ENCODE measurements at regions of chr4 and their contacts with region 1.

Region 1: GRCh38 chr4:156946516-156947424 is 24.8 kb downstream of the PDGFC start:
- DNase-seq: peak; percentile 89
- H3K4me3 ChIP-seq: no peak overlapping the region
- H3K27ac ChIP-seq: peak overlapping the region; percentile 84
- H3K4me1 ChIP-seq: peaks cover 60% of the 10 kb centered on the region
- H3K27me3 ChIP-seq: no peaks in the 10 kb centered on the region
- CTCF ChIP-seq: no peak
- POLR2A ChIP-seq: no peak

Region 2: GRCh38 chr4:156594624-156595023 is 352.1 kb before region 1 on chr4:
- CTCF ChIA-PET with region 1: no interaction called
- POLR2A ChIA-PET with region 1: no interaction called
- dilution Hi-C with region 1: no loop called
- intact Hi-C with region 1: loop called (anchors 2 kb)
- DNase-seq: no peak
- H3K4me3 ChIP-seq: no peak overlapping the region
- H3K27ac ChIP-seq: no peak overlapping the region
- H3K4me1 ChIP-seq: peaks cover 12% of the 10 kb centered on the region
- H3K27me3 ChIP-seq: no peaks in the 10 kb centered on the region
- CTCF ChIP-seq: no peak
- POLR2A ChIP-seq: no peak

Region 3: GRCh38 chr4:156754832-156755570 is 191.8 kb before region 1 on chr4:
- CTCF ChIA-PET with region 1: no interaction called
- POLR2A ChIA-PET with region 1: no interaction called
- dilution Hi-C with region 1: no loop called
- intact Hi-C with region 1: no loop called
- DNase-seq: no peak
- H3K4me3 ChIP-seq: no peak overlapping the region
- H3K27ac ChIP-seq: no peak overlapping the region
- H3K4me1 ChIP-seq: peaks cover 7% of the 10 kb centered on the region
- H3K27me3 ChIP-seq: no peaks in the 10 kb centered on the region
- CTCF ChIP-seq: no peak
- POLR2A ChIP-seq: no peak

Region 4: GRCh38 chr4:156778606-156779005 is 168.2 kb before region 1 on chr4:
- CTCF ChIA-PET with region 1: interaction called, 3 read pairs
- POLR2A ChIA-PET with region 1: no interaction called
- dilution Hi-C with region 1: no loop called
- intact Hi-C with region 1: loop called (anchors 1 kb)
- DNase-seq: no peak
- H3K4me3 ChIP-seq: no peak overlapping the region
- H3K27ac ChIP-seq: no peak overlapping the region
- H3K4me1 ChIP-seq: peaks cover 20% of the 10 kb centered on the region
- H3K27me3 ChIP-seq: no peaks in the 10 kb centered on the region
- CTCF ChIP-seq: no peak
- POLR2A ChIP-seq: no peak

Region 5: DNA sequence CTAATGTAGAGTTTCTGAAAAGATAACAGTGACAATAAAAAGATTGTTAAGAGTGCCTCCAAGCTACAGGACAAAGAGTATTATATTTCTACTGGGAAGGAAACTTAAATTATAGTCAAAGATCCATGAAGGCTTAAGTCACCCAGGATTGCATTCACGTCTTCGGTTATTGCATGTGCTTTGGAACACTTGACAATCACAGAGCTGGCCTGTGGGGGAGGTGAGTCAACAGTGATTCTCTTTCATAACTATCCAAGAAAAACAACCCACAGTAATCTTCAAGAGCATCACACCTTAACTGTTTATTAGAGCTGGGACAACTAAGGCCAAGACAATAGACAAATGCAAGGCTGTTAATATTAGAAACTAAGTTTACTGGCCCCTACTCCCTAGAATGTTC is 15.5 kb before region 1 on chr4:
- CTCF ChIA-PET with region 1: interaction called, 4 read pairs
- POLR2A ChIA-PET with region 1: no interaction called
- dilution Hi-C with region 1: no loop called
- intact Hi-C with region 1: loop called (anchors 1 kb)
- DNase-seq: peak; percentile 74
- H3K4me3 ChIP-seq: no peak overlapping the region
- H3K27ac ChIP-seq: no peak overlapping the region
- H3K4me1 ChIP-seq: peaks cover 8% of the 10 kb centered on the region
- H3K27me3 ChIP-seq: no peaks in the 10 kb centered on the region
- CTCF ChIP-seq: no peak
- POLR2A ChIP-seq: no peak

Region 6: GRCh38 chr4:156999175-156999516 is 52.4 kb after region 1 on chr4:
- CTCF ChIA-PET with region 1: no interaction called
- POLR2A ChIA-PET with region 1: no interaction called
- dilution Hi-C with region 1: no loop called
- intact Hi-C with region 1: loop called (anchors 1 kb)
- DNase-seq: peak; percentile 98
- H3K4me3 ChIP-seq: peak overlapping the region in 1 of 3 experiments; percentile 2
- H3K27ac ChIP-seq: peak overlapping the region; percentile 62
- H3K4me1 ChIP-seq: peaks cover 23% of the 10 kb centered on the region
- H3K27me3 ChIP-seq: no peaks in the 10 kb centered on the region
- CTCF ChIP-seq: no peak
- POLR2A ChIP-seq: no peak